Posterior vena cava (tissue), 2 donors: ENCODE measurements at regions of chr4 and their contacts with region 1.

Region 1: DNA sequence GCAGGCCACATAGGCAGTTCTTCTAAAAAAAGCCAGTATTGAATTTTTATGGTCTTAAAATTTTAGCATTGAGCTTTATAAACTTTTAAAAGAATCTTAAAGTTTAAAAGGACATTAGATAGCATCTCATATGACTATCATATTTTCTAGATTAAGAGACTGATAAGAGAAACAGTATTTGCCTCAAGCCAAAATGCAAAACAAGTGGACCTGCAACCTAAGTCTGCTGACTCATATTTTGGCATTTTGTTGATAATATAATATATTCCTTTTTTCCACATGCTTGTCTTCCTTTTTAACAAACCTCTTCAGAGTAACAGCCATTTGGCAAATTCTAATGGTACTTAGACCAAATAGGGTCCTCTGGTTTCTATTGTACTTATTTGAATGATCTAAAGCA is 328.5 kb upstream of the GALNTL6 start:
- DNase-seq: no peak

Region 2: GRCh38 chr4:171461191-171461590 is 23.5 kb before region 1 on chr4:
- intact Hi-C with region 1: loop called in 1 of 2 experiments (anchors 2 kb)
- DNase-seq: no peak